ENCODE measurements at regions of chr12 and their contacts with region 1.

Region 1: DNA sequence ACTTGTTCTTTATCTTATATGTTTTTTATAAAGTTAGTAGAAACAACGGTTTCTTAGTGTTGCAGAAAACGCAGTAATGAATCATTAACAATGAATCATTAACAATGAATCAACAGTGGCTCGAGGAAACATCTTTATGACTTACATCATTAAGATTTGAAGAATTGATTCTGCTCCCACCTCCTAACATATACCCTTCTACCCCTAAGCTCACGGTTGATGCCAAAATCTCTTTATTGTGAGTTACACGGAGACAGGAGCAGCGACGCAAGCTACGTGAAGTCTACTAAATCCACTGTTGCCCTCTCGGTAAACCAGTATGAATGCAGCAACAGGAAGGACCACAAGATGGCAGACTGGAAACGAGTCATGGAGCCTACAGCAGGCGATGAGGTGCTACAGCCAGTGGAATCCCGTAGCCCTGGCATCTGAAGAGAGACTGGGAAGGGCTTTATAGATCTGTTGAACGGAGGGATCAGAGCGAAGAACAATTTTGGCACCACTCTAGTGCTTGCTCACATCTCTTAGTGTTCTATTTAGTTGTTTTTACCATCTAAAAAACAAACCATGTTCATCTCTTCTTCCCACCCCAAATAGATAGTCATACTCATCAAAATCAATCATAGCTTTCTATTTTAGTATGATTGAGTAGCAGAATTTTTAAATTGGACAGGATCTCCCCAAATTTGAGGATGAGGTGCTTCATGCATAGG is 332.7 kb downstream of the DUSP6 start:
- DNase-seq: peak; percentile 48 to 83 (median 64)
- ATAC-seq: peak; percentile 97
- H3K4me3 ChIP-seq: peak overlapping the region in 1 of 2 experiments; percentile 16
- H3K4me3 Mint-ChIP-seq: no peak overlapping the region
- H3K27ac ChIP-seq: no peak overlapping the region
- H3K27ac Mint-ChIP-seq: no peak overlapping the region
- H3K4me1 ChIP-seq: no peaks in the 10 kb centered on the region
- H3K4me1 Mint-ChIP-seq: peaks cover 3% of the 10 kb centered on the region
- H3K27me3 ChIP-seq: peaks cover 0 to 2% of the 10 kb centered on the region in 2 experiments
- H3K27me3 Mint-ChIP-seq: peaks cover 6% of the 10 kb centered on the region
- CTCF ChIP-seq: peak; percentile 76

Region 2: GRCh38 chr12:88006351-88006750 is 1013.2 kb before region 1 on chr12:
- CTCF ChIA-PET with region 1: no interaction called
- POLR2A ChIA-PET with region 1: no interaction called
- intact Hi-C with region 1: no loop called
- DNase-seq: no peak
- ATAC-seq: no peak
- H3K4me3 ChIP-seq: no peak overlapping the region
- H3K4me3 Mint-ChIP-seq: no peak overlapping the region
- H3K27ac ChIP-seq: no peak overlapping the region
- H3K27ac Mint-ChIP-seq: no peak overlapping the region
- H3K4me1 ChIP-seq: no peaks in the 10 kb centered on the region
- H3K4me1 Mint-ChIP-seq: no peaks in the 10 kb centered on the region
- H3K27me3 ChIP-seq: no peaks in the 10 kb centered on the region
- H3K27me3 Mint-ChIP-seq: peaks cover 8% of the 10 kb centered on the region
- CTCF ChIP-seq: no peak

Region 3: GRCh38 chr12:88693837-88694445 is 325.6 kb before region 1 on chr12:
- CTCF ChIA-PET with region 1: no interaction called
- POLR2A ChIA-PET with region 1: no interaction called
- intact Hi-C with region 1: no loop called
- DNase-seq: no peak
- ATAC-seq: no peak
- H3K4me3 ChIP-seq: no peak overlapping the region
- H3K4me3 Mint-ChIP-seq: no peak overlapping the region
- H3K27ac ChIP-seq: no peak overlapping the region
- H3K27ac Mint-ChIP-seq: no peak overlapping the region
- H3K4me1 ChIP-seq: no peaks in the 10 kb centered on the region
- H3K4me1 Mint-ChIP-seq: no peaks in the 10 kb centered on the region
- H3K27me3 ChIP-seq: no peaks in the 10 kb centered on the region
- H3K27me3 Mint-ChIP-seq: no peaks in the 10 kb centered on the region
- CTCF ChIP-seq: no peak

Region 4: DNA sequence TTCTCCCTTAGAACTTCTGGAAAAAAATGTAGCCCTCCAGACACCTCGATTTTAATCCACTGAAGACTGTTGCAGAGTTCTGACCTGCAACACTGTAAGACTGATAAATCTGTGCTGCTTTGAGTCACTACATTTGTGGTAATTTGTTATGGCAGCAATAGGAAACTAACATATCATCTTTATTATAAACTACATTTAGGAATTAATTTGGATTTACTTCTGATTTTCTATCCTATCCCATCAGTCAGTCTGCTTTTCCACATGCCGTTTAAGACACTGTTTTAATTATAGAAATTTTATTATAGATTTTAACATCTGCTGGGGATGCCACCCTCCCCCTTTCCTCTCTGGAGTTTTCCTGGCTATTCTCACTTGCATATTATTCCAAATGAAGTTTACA is 42.4 kb before region 1 on chr12:
- CTCF ChIA-PET with region 1: no interaction called
- POLR2A ChIA-PET with region 1: no interaction called
- intact Hi-C with region 1: no loop called
- DNase-seq: no peak
- ATAC-seq: no peak
- H3K4me3 ChIP-seq: no peak overlapping the region
- H3K4me3 Mint-ChIP-seq: no peak overlapping the region
- H3K27ac ChIP-seq: no peak overlapping the region
- H3K27ac Mint-ChIP-seq: no peak overlapping the region
- H3K4me1 ChIP-seq: no peaks in the 10 kb centered on the region
- H3K4me1 Mint-ChIP-seq: no peaks in the 10 kb centered on the region
- H3K27me3 ChIP-seq: no peaks in the 10 kb centered on the region
- H3K27me3 Mint-ChIP-seq: peaks cover 7% of the 10 kb centered on the region
- CTCF ChIP-seq: no peak

Region 5: GRCh38 chr12:89029961-89030360 is 10.4 kb after region 1 on chr12:
- CTCF ChIA-PET with region 1: interaction called, 78 read pairs
- POLR2A ChIA-PET with region 1: interaction called, 3 read pairs
- intact Hi-C with region 1: no loop called
- DNase-seq: no peak
- ATAC-seq: no peak
- H3K4me3 ChIP-seq: no peak overlapping the region
- H3K4me3 Mint-ChIP-seq: no peak overlapping the region
- H3K27ac ChIP-seq: no peak overlapping the region
- H3K27ac Mint-ChIP-seq: no peak overlapping the region
- H3K4me1 ChIP-seq: no peaks in the 10 kb centered on the region
- H3K4me1 Mint-ChIP-seq: no peaks in the 10 kb centered on the region
- H3K27me3 ChIP-seq: no peaks in the 10 kb centered on the region
- H3K27me3 Mint-ChIP-seq: peaks cover 3% of the 10 kb centered on the region
- CTCF ChIP-seq: no peak

Region 6: GRCh38 chr12:89051065-89051677 is 31.6 kb after region 1 on chr12:
- CTCF ChIA-PET with region 1: interaction called, 4 read pairs
- POLR2A ChIA-PET with region 1: no interaction called
- intact Hi-C with region 1: loop called in 1 of 2 experiments (anchors 1 kb)
- DNase-seq: peak in 3 of 9 experiments; percentile 19 to 72 (median 64)
- ATAC-seq: peak; percentile 70
- H3K4me3 ChIP-seq: no peak overlapping the region
- H3K4me3 Mint-ChIP-seq: no peak overlapping the region
- H3K27ac ChIP-seq: no peak overlapping the region
- H3K27ac Mint-ChIP-seq: no peak overlapping the region
- H3K4me1 ChIP-seq: no peaks in the 10 kb centered on the region
- H3K4me1 Mint-ChIP-seq: no peaks in the 10 kb centered on the region
- H3K27me3 ChIP-seq: no peaks in the 10 kb centered on the region
- H3K27me3 Mint-ChIP-seq: no peaks in the 10 kb centered on the region
- CTCF ChIP-seq: peak; percentile 90

Region 7: DNA sequence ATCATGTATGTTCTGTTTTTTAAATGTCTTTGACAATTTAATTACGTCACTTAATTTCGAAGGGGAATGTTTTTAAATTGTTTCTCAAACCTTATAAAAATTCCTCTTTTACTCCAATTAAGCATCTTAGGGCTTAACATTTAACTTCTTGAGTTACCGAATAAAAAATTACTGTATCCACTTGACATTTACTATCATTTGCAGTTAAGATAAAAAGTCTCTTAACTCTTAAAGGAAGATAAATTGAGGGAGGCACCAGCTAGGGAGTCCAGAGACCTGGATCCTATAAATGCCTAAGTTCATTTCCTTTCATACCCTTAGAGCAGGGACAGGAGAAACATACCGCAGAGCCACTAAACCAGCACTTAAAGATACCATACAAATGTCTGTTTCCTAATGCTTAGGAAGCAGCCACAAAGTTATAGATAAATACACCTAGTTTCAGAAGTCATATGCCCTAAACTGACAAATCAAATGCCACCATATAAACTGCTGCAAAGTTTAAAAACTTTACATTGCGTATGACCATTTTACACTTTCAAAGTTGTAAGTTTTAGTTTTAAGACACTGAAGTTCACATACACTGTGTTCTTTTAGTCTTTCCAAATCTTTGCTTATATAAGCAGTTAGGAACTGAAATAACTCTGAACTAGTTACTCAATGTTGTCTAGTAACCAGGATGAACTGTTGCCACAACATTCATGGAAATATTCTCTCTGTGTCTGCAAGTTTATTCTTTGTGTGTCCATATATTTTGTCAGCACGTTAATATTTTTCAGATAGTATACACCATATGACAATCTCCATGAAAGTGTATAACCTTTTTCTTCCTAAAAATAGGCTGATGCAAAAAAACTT is 433.8 kb after region 1 on chr12:
- CTCF ChIA-PET with region 1: interaction called, 51 read pairs
- POLR2A ChIA-PET with region 1: no interaction called
- intact Hi-C with region 1: no loop called
- DNase-seq: no peak
- ATAC-seq: no peak
- H3K4me3 ChIP-seq: no peak overlapping the region
- H3K4me3 Mint-ChIP-seq: no peak overlapping the region
- H3K27ac ChIP-seq: no peak overlapping the region
- H3K27ac Mint-ChIP-seq: no peak overlapping the region
- H3K4me1 ChIP-seq: no peaks in the 10 kb centered on the region
- H3K4me1 Mint-ChIP-seq: peaks cover 12% of the 10 kb centered on the region
- H3K27me3 ChIP-seq: no peaks in the 10 kb centered on the region
- H3K27me3 Mint-ChIP-seq: no peaks in the 10 kb centered on the region
- CTCF ChIP-seq: no peak

Region 8: GRCh38 chr12:89470741-89471509 is 451.4 kb after region 1 on chr12:
- CTCF ChIA-PET with region 1: interaction called, 40 read pairs
- POLR2A ChIA-PET with region 1: interaction called, 3 read pairs
- intact Hi-C with region 1: no loop called
- DNase-seq: peak in 2 of 9 experiments; percentile 62 to 73
- ATAC-seq: peak; percentile 71
- H3K4me3 ChIP-seq: no peak overlapping the region
- H3K4me3 Mint-ChIP-seq: no peak overlapping the region
- H3K27ac ChIP-seq: peak overlapping the region in 1 of 2 experiments; percentile 30
- H3K27ac Mint-ChIP-seq: peak overlapping the region; percentile 67
- H3K4me1 ChIP-seq: peaks cover 30% of the 10 kb centered on the region
- H3K4me1 Mint-ChIP-seq: peaks cover 55% of the 10 kb centered on the region
- H3K27me3 ChIP-seq: no peaks in the 10 kb centered on the region
- H3K27me3 Mint-ChIP-seq: no peaks in the 10 kb centered on the region
- CTCF ChIP-seq: peak; percentile 70

Region 9: GRCh38 chr12:89529738-89530137 is 510.2 kb after region 1 on chr12:
- CTCF ChIA-PET with region 1: interaction called, 109 read pairs
- POLR2A ChIA-PET with region 1: interaction called, 5 read pairs
- intact Hi-C with region 1: loop called (anchors 1 kb)
- DNase-seq: peak in 2 of 9 experiments; percentile 61 to 70
- ATAC-seq: peak; percentile 33
- H3K4me3 ChIP-seq: no peak overlapping the region
- H3K4me3 Mint-ChIP-seq: no peak overlapping the region
- H3K27ac ChIP-seq: no peak overlapping the region
- H3K27ac Mint-ChIP-seq: no peak overlapping the region
- H3K4me1 ChIP-seq: no peaks in the 10 kb centered on the region
- H3K4me1 Mint-ChIP-seq: peaks cover 21% of the 10 kb centered on the region
- H3K27me3 ChIP-seq: no peaks in the 10 kb centered on the region
- H3K27me3 Mint-ChIP-seq: no peaks in the 10 kb centered on the region
- CTCF ChIP-seq: peak; percentile 73

Measured in CD8-positive, alpha-beta T cell (primary cell).